Naive thymus-derived CD4-positive, alpha-beta T cell (primary cell): ENCODE measurements at regions of chr9 and their contacts with region 1.

Region 1: DNA sequence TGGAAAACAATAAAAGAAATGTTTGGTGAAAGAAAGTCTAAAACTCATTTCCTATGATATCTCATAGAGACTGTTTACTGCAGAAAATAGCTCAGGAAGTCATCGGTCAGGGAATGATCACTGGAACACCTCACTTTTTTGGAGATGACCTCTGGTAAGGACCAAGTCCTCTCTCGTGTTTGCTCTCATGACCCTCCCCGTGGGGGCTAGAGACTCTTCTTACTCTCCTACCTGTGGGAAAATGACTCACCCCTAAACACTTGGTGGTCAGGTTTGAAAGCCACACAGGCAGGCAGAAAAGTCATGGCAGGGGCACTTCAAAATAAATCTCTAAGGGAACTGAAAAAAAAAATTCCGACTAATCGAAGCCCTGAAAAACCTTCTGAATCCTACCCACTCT is 48.2 kb downstream of the FAM240B start:
- DNase-seq: no peak
- ATAC-seq: no peak
- H3K4me3 ChIP-seq: no peak overlapping the region
- H3K4me3 Mint-ChIP-seq: peak overlapping the region in 1 of 10 donors; percentile 7
- H3K27ac ChIP-seq: no peak overlapping the region
- H3K27ac Mint-ChIP-seq: no peak overlapping the region
- H3K4me1 ChIP-seq: peaks cover 0 to 4% of the 10 kb centered on the region in 2 donors
- H3K4me1 Mint-ChIP-seq: peaks cover 0 to 8% (median 3%) of the 10 kb centered on the region in 7 donors
- H3K27me3 ChIP-seq: no peaks in the 10 kb centered on the region
- H3K27me3 Mint-ChIP-seq: peaks cover 0 to 4% (median 0%) of the 10 kb centered on the region in 5 donors

Region 2: DNA sequence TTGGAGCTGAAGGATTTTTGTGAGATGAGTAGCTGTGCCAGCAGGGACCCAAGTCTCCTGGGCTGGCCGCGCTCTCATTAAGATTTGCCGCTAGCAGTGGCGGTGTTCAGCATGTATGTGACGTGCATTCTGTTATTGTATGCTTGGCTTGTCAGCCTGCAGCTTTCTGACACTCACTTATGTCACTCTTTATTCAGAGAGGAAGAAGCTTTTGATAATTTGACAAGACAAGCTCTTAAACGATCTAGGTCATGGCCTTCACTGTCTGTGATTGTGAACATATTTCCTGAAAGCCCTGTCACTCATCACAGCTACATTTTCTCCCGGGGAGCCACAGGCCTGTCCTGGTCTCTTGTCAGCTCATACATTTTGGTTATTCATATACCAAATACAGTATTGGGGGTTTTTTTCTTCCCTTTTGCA is 1347.5 kb before region 1 on chr9:
- CTCF ChIA-PET with region 1: no interaction called
- POLR2A ChIA-PET with region 1: no interaction called
- intact Hi-C with region 1: no loop called
- DNase-seq: no peak
- ATAC-seq: peak; percentile 22
- H3K4me3 ChIP-seq: no peak overlapping the region
- H3K4me3 Mint-ChIP-seq: no peak overlapping the region
- H3K27ac ChIP-seq: no peak overlapping the region
- H3K27ac Mint-ChIP-seq: peak overlapping the region in 1 of 9 donors; percentile 73
- H3K4me1 ChIP-seq: no peaks in the 10 kb centered on the region
- H3K4me1 Mint-ChIP-seq: peaks cover 0 to 8% (median 3%) of the 10 kb centered on the region in 7 donors
- H3K27me3 ChIP-seq: no peaks in the 10 kb centered on the region
- H3K27me3 Mint-ChIP-seq: no peaks in the 10 kb centered on the region

Region 3: DNA sequence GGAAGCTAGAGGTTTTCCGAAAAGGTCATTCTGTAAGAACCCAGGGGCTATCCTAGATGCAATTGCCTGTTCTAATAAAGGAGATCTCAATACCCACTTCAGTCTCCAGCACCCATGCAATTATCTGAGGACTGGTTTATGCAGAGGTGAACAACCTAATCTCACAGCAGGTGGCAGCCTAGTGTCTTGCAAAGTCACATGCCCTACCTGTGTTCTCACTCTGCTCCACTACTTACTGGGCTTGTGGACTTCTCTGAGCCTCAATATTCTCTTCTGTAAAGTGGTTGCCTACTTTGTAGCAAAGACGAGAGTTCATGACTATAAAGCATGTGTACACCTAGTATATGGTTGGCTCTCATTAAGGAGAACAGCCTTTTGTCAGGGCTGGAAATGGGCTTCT is 300.3 kb before region 1 on chr9:
- CTCF ChIA-PET with region 1: no interaction called
- POLR2A ChIA-PET with region 1: no interaction called
- intact Hi-C with region 1: loop called in 1 of 2 experiments (anchors 2 kb)
- DNase-seq: peak in 5 of 9 donors; percentile 18 to 41 (median 33)
- ATAC-seq: peak; percentile 57
- H3K4me3 ChIP-seq: no peak overlapping the region
- H3K4me3 Mint-ChIP-seq: no peak overlapping the region
- H3K27ac ChIP-seq: no peak overlapping the region
- H3K27ac Mint-ChIP-seq: no peak overlapping the region
- H3K4me1 ChIP-seq: no peaks in the 10 kb centered on the region
- H3K4me1 Mint-ChIP-seq: no peaks in the 10 kb centered on the region
- H3K27me3 ChIP-seq: no peaks in the 10 kb centered on the region
- H3K27me3 Mint-ChIP-seq: peaks cover 0 to 14% (median 6%) of the 10 kb centered on the region in 5 donors

Region 4: GRCh38 chr9:38445154-38446043 is 226.3 kb before region 1 on chr9:
- CTCF ChIA-PET with region 1: no interaction called
- POLR2A ChIA-PET with region 1: no interaction called
- intact Hi-C with region 1: no loop called
- DNase-seq: no peak
- ATAC-seq: no peak
- H3K4me3 ChIP-seq: no peak overlapping the region
- H3K4me3 Mint-ChIP-seq: no peak overlapping the region
- H3K27ac ChIP-seq: no peak overlapping the region
- H3K27ac Mint-ChIP-seq: no peak overlapping the region
- H3K4me1 ChIP-seq: no peaks in the 10 kb centered on the region
- H3K4me1 Mint-ChIP-seq: peaks cover 0 to 3% (median 0%) of the 10 kb centered on the region in 7 donors
- H3K27me3 ChIP-seq: no peaks in the 10 kb centered on the region
- H3K27me3 Mint-ChIP-seq: peaks cover 0 to 31% (median 6%) of the 10 kb centered on the region in 5 donors

Region 5: DNA sequence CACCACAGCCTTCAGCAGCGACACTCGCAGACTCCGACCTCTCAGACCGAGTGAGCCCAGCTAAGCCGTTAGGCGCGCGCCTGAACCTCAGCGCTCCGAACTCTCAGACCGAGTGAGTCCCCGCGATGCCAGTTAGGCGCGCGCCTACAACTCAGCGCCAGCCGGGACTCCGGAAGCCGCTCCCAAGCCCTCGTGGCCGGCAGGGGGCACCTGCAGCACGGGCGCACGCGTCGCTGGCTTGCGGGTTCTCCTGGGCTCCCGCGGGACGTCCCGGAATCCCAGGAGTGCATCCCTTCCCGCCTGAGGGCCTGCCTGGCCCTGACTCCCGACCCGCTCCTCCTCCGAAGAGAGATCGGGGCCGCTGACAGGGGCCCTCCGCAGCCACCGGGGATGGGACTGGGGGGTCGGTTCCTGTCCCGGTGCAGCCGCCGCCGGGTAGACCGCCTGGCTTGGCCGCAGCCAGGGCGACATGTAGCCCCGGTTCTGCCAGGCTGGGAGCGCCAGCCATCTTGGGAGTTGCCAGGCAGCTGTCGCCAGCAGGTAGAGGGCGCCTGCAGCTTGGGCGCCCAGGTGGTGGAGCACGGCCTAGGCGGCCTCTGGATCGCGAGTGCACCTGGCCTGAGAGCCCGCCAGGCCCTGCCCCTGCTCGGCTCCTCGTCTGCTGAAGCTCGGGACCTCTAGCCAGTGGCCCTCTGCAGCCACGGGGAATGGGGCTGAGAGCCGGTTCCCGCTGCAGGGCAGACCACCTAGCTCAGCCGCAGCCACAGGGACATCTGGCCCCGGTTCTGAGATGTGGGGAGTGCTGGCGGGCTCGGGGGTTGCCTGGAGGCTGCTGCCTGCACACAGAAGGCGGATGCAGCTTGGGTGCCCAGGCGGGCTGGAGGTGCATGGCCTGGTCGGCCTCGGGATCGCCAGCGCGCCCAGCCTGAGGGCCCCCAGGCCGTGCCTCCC is 51.0 kb before region 1 on chr9 and contains the start of gene ANKRD18A:
- CTCF ChIA-PET with region 1: no interaction called
- POLR2A ChIA-PET with region 1: no interaction called
- intact Hi-C with region 1: loop called (anchors 1 to 2 kb)
- DNase-seq: peak; percentile 45 to 74 (median 66)
- ATAC-seq: peak; percentile 88
- H3K4me3 ChIP-seq: peak within 1 kb of the TSS; percentile 68
- H3K4me3 Mint-ChIP-seq: peak within 1 kb of the TSS; percentile 84 to 95 (median 89)
- H3K27ac ChIP-seq: peak within 1 kb of the TSS; percentile 51
- H3K27ac Mint-ChIP-seq: peak within 1 kb of the TSS in 5 of 9 donors; percentile 53 to 93 (median 78)
- H3K4me1 ChIP-seq: peaks cover 0 to 5% of the 10 kb centered on the region in 2 donors
- H3K4me1 Mint-ChIP-seq: peaks cover 7 to 15% (median 14%) of the 10 kb centered on the region in 7 donors
- H3K27me3 ChIP-seq: no peaks in the 10 kb centered on the region
- H3K27me3 Mint-ChIP-seq: peaks cover 0 to 53% (median 15%) of the 10 kb centered on the region in 5 donors
- total RNA-seq, gene ANKRD18A: 2.4 to 14.9 (median 8.5) TPM

Region 6: DNA sequence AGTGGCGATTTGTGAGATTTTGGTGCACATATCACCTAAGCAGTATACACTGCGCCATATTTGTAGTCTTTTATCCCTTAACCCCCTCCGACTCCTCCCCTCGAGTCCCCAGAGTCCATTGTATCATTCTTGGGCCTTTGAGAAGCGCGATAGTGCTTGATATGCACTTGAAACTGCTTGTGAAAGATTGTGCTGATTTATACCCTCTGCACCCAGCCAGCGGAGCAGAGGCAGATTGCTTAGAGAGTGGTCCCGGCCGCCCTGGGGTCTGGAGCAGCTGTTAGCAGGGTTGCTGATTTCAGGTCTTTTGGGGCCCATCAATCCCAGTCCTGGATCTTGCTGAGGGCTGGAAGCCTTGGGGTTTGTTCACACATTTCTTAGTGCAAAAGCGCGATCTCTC is 61.1 kb after region 1 on chr9:
- CTCF ChIA-PET with region 1: no interaction called
- POLR2A ChIA-PET with region 1: no interaction called
- intact Hi-C with region 1: loop called in 1 of 2 experiments (anchors 10 kb)
- DNase-seq: no peak
- ATAC-seq: no peak
- H3K4me3 ChIP-seq: no peak overlapping the region
- H3K4me3 Mint-ChIP-seq: no peak overlapping the region
- H3K27ac ChIP-seq: no peak overlapping the region
- H3K27ac Mint-ChIP-seq: no peak overlapping the region
- H3K4me1 ChIP-seq: no peaks in the 10 kb centered on the region
- H3K4me1 Mint-ChIP-seq: no peaks in the 10 kb centered on the region
- H3K27me3 ChIP-seq: no peaks in the 10 kb centered on the region
- H3K27me3 Mint-ChIP-seq: peaks cover 0 to 36% (median 11%) of the 10 kb centered on the region in 5 donors